Ovary (tissue), 10 donors: ENCODE measurements at regions of chr10 and their contacts with region 1.

Region 1: GRCh38 chr10:24360282-24361127 is 151.6 kb downstream of the KIAA1217 start:
- DNase-seq: peak; percentile 69 to 84 (median 81)
- H3K4me3 ChIP-seq: no peak overlapping the region
- H3K27ac ChIP-seq: no peak overlapping the region
- H3K4me1 ChIP-seq: no peaks in the 10 kb centered on the region
- H3K27me3 ChIP-seq: no peaks in the 10 kb centered on the region
- CTCF ChIP-seq: peak; percentile 53 to 60 (median 57)
- EP300 ChIP-seq: no peak
- POLR2A ChIP-seq: no peak

Region 2: GRCh38 chr10:23994479-23995046 is 365.9 kb before region 1 on chr10:
- intact Hi-C with region 1: loop called in 2 of 4 experiments (anchors 5 to 10 kb)
- DNase-seq: peak; percentile 36 to 66 (median 59)
- H3K4me3 ChIP-seq: no peak overlapping the region
- H3K27ac ChIP-seq: no peak overlapping the region
- H3K4me1 ChIP-seq: no peaks in the 10 kb centered on the region
- H3K27me3 ChIP-seq: no peaks in the 10 kb centered on the region
- CTCF ChIP-seq: peak in 2 of 3 donors; percentile 65 to 88
- EP300 ChIP-seq: no peak
- POLR2A ChIP-seq: no peak

Region 3: GRCh38 chr10:24287559-24288195 is 72.8 kb before region 1 on chr10:
- intact Hi-C with region 1: no loop called
- DNase-seq: no peak
- H3K4me3 ChIP-seq: no peak overlapping the region
- H3K27ac ChIP-seq: no peak overlapping the region
- H3K4me1 ChIP-seq: no peaks in the 10 kb centered on the region
- H3K27me3 ChIP-seq: no peaks in the 10 kb centered on the region
- CTCF ChIP-seq: no peak
- EP300 ChIP-seq: no peak
- POLR2A ChIP-seq: no peak